ENCODE measurements at regions of chr7 and their contacts with region 1.

Region 1: DNA sequence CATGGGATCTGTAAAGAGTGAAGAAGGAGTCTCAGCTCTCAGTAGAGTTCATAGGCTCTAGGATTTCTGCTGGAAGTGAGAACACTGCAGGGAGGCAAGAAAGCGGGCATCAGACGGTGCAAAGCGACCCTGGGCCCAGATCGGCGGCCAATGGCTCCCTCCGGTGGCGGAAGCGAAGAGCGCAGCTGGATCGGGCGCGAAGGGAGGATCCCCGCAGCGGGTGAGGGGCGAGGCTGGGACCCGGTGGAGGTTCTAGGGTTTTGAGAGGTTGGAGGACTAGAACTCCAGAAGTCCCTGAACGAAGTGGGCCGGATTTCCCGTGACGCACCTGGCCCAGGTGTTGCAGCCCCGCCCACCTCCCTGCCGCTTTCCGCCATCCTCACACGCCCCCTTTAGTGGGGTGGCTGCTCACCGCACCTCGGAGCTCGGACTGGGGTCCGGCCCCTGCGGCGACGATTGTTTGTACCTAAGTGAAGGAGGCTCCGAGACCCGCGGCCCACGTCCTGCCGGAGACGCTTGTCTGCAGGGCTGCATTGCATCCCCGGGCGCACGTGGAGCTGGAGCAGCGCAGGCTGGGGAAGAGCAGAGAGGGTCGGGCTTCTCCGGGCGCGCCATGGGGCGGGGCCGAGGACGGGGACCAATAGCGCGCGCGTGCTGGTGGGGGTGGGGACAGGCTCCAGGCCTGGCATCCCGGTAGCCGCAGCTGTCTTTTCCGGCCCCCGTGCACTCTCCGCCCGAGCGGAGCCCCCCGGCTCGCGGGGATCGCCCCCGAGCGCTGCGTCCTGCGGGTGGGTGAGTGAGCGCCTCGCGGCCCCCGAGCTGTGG is at the start of gene SLC12A9:
- DNase-seq: peak; percentile 83
- ATAC-seq: peak; percentile 93
- H3K4me3 Mint-ChIP-seq: peak within 1 kb of the TSS; percentile 89
- H3K27ac Mint-ChIP-seq: peak within 1 kb of the TSS; percentile 75
- H3K4me1 Mint-ChIP-seq: peaks cover 21% of the 10 kb centered on the region
- H3K27me3 Mint-ChIP-seq: no peaks in the 10 kb centered on the region
- CTCF ChIP-seq: peak; percentile 79
- total RNA-seq, gene SLC12A9: 48.0 and 48.9 TPM in 2 replicates

Region 2: GRCh38 chr7:100469227-100470044 is 382.8 kb before region 1 on chr7:
- CTCF ChIA-PET with region 1: no interaction called
- POLR2A ChIA-PET with region 1: no interaction called
- intact Hi-C with region 1: loop called (anchors 2 kb)
- DNase-seq: peak; percentile 81
- ATAC-seq: peak; percentile 91
- H3K4me3 Mint-ChIP-seq: no peak overlapping the region
- H3K27ac Mint-ChIP-seq: peak overlapping the region; percentile 46
- H3K4me1 Mint-ChIP-seq: peaks cover 24% of the 10 kb centered on the region
- H3K27me3 Mint-ChIP-seq: no peaks in the 10 kb centered on the region
- CTCF ChIP-seq: no peak

Region 3: GRCh38 chr7:100604028-100604975 is 248.0 kb before region 1 on chr7:
- CTCF ChIA-PET with region 1: interaction called, 4 read pairs
- POLR2A ChIA-PET with region 1: interaction called, 3 read pairs
- intact Hi-C with region 1: loop called (anchors 1 kb)
- DNase-seq: peak; percentile 75
- ATAC-seq: peak; percentile 78
- H3K4me3 Mint-ChIP-seq: peak overlapping the region; percentile 85
- H3K27ac Mint-ChIP-seq: peak overlapping the region; percentile 30
- H3K4me1 Mint-ChIP-seq: peaks cover 19% of the 10 kb centered on the region
- H3K27me3 Mint-ChIP-seq: no peaks in the 10 kb centered on the region
- CTCF ChIP-seq: no peak

Region 4: GRCh38 chr7:100726996-100727761 is 125.1 kb before region 1 on chr7:
- CTCF ChIA-PET with region 1: interaction called, 3 read pairs
- POLR2A ChIA-PET with region 1: no interaction called
- intact Hi-C with region 1: loop called (anchors 1 kb)
- DNase-seq: no peak
- ATAC-seq: no peak
- H3K4me3 Mint-ChIP-seq: no peak overlapping the region
- H3K27ac Mint-ChIP-seq: no peak overlapping the region
- H3K4me1 Mint-ChIP-seq: peaks cover 5% of the 10 kb centered on the region
- H3K27me3 Mint-ChIP-seq: peaks cover 19% of the 10 kb centered on the region
- CTCF ChIP-seq: no peak

Region 5: DNA sequence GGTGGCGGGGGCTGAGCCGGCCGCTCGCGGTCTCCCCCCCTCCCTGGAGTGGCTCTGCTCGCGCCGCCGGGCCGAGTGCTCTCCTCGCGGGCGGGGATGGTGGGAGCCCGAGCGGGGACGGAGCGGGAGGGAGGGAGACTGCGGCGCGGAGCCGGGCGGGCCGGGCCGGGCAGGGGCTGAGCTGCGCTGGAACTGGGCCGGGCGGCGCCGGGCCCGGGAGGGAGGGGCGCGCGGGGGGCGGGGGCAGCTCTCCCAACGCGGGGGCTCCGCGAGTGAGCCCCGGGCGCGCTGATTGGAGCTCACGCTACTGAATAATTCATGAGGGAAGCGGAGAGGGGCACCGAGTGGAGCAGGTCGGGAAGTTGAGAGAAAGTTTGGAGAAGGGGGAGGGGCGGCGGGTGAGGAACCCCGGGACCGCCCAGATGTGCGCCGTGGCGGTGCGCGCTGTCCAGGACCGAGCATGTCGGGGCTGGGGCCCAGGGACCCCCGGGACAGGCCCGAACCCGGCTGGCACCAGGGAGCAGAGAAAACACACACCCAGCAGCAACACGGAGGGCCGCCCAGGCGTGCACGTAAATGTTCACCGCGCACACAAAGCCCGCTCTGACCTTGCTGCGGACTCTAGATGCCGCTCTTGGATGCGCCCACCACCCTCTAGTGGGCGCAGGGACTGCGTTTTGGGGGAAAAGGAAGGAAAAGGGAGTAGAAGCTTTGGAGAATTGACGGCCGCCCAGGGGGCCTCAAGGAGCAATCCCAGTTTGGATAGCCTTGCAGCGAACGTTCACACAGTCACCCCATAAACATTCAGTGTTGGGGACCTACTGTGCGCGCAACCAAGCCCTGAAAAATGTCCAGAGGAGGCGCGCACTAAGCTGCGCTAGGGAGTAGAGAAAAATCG is 24.7 kb before region 1 on chr7 and contains the start of gene EPHB4:
- CTCF ChIA-PET with region 1: interaction called, 6 read pairs
- POLR2A ChIA-PET with region 1: no interaction called
- intact Hi-C with region 1: loop called (anchors 2 kb)
- DNase-seq: no peak
- ATAC-seq: peak; percentile 49
- H3K4me3 Mint-ChIP-seq: peak within 1 kb of the TSS; percentile 71
- H3K27ac Mint-ChIP-seq: no peak within 1 kb of the TSS
- H3K4me1 Mint-ChIP-seq: peaks cover 18% of the 10 kb centered on the region
- H3K27me3 Mint-ChIP-seq: peaks cover 36% of the 10 kb centered on the region
- CTCF ChIP-seq: no peak
- total RNA-seq, gene EPHB4: 2.5 and 4.1 TPM in 2 replicates

Region 6: DNA sequence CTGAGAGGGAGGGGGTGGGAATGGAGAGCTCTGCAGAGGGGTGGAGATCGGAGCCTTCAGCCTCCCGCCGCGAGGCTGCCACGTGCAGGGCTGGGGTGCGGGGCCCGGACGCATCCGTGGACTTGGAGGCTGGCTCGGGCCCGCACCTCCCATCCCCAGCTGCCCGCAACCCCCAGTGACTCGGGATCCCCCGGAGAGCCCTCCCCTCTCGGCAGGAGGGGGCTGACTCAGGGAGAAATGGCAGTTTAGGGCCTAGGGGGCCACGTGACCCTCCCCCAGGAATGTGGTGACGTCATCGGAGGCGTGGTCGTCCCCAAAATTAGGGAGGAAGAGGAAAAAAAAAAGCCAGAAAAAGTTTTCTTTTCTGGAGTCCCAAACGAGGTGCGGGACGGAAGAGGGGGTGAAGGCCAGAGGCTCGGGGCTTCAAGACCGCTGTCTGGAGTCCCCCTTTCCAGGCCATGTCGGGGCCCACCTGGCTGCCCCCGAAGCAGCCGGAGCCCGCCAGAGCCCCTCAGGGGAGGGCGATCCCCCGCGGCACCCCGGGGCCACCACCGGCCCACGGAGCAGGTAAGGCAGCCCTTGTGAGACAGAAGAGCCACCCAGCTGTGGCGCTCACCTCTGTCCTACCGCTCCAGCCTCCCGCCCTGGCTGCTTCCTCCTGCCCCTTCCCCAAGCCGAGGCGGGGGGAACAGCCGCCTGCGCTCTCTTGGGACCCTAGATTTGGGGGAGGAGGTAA is 14.9 kb after region 1 on chr7 and contains the start of gene TRIP6:
- CTCF ChIA-PET with region 1: interaction called, 3 read pairs
- POLR2A ChIA-PET with region 1: interaction called, 17 read pairs
- intact Hi-C with region 1: loop called (anchors 1 kb)
- DNase-seq: no peak
- ATAC-seq: peak; percentile 59
- H3K4me3 Mint-ChIP-seq: peak within 1 kb of the TSS; percentile 85
- H3K27ac Mint-ChIP-seq: peak within 1 kb of the TSS; percentile 85
- H3K4me1 Mint-ChIP-seq: peaks cover 22% of the 10 kb centered on the region
- H3K27me3 Mint-ChIP-seq: no peaks in the 10 kb centered on the region
- CTCF ChIP-seq: no peak
- total RNA-seq, gene TRIP6: 12.6 and 16.9 TPM in 2 replicates

Region 7: GRCh38 chr7:100889761-100890634 is 37.7 kb after region 1 on chr7:
- CTCF ChIA-PET with region 1: interaction called, 6 read pairs
- POLR2A ChIA-PET with region 1: interaction called, 15 read pairs
- intact Hi-C with region 1: loop called (anchors 1 kb)
- DNase-seq: peak; percentile 89
- ATAC-seq: peak; percentile 85
- H3K4me3 Mint-ChIP-seq: peak overlapping the region; percentile 87
- H3K27ac Mint-ChIP-seq: peak overlapping the region; percentile 76
- H3K4me1 Mint-ChIP-seq: peaks cover 50% of the 10 kb centered on the region
- H3K27me3 Mint-ChIP-seq: peaks cover 23% of the 10 kb centered on the region
- CTCF ChIP-seq: no peak